Naive thymus-derived CD4-positive, alpha-beta T cell (primary cell): ENCODE measurements at regions of chr4 and their contacts with region 1.

Region 1: DNA sequence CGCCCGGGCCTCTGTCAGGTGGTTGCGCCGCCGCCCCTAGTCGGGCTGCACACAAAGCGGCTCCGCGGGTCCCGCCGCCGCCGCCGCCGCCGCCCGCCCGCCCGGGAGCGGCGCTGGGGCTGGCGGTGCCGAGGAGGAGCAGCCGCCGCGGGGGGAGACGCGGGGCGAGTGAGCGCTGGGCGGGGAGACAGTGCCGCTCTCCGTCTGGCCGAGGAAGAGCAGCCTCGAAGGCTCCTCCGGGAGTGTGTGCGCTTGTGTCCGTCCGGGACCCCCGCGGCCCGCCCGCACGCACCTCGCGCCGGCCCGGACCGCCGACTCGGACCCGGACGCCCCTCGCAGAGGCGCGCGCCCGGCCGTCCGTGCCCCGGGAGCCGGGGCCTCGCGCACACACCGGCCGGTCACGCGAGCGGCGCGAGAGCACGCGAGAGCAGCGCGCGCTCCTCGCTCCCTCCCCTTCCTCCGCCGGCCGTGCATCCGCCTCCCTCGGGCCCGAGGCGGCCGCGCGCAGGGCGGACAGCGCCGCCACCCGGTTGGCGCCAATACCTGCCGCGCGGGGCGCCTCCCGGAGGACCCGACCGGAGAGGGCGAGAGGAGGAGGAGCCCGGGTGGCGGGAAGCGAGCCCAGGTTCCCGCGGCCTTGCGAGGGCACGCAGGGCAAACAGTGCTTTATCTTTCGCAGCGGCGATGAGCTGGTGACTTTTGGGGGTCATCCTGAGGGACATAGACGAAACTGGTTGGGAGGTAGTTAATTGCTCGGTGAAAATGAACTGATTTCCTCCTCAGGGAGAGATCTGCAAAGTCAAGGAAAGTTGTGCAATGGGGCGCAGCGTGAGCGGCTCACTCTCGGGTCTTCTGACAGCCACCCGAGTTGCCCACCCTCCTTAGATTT is at the start of gene PDS5A:
- DNase-seq: peak; percentile 83 to 95 (median 91)
- ATAC-seq: peak; percentile 94
- H3K4me3 ChIP-seq: peak within 1 kb of the TSS; percentile 78
- H3K4me3 Mint-ChIP-seq: peak within 1 kb of the TSS; percentile 87 to 99 (median 91)
- H3K27ac ChIP-seq: peak within 1 kb of the TSS; percentile 89
- H3K27ac Mint-ChIP-seq: peak within 1 kb of the TSS; percentile 91 to 98 (median 96)
- H3K4me1 ChIP-seq: peaks cover 3 to 18% of the 10 kb centered on the region in 2 donors
- H3K4me1 Mint-ChIP-seq: peaks cover 28 to 43% (median 31%) of the 10 kb centered on the region in 7 donors
- H3K27me3 ChIP-seq: no peaks in the 10 kb centered on the region
- H3K27me3 Mint-ChIP-seq: no peaks in the 10 kb centered on the region
- total RNA-seq, gene PDS5A: 92.7 to 102 (median 98.5) TPM

Region 2: GRCh38 chr4:38759113-38759789 is 1218.5 kb before region 1 on chr4:
- CTCF ChIA-PET with region 1: no interaction called
- POLR2A ChIA-PET with region 1: no interaction called
- intact Hi-C with region 1: loop called in 1 of 2 experiments (anchors 2 kb)
- DNase-seq: peak; percentile 29 to 66 (median 58)
- ATAC-seq: peak; percentile 64
- H3K4me3 ChIP-seq: no peak overlapping the region
- H3K4me3 Mint-ChIP-seq: no peak overlapping the region
- H3K27ac ChIP-seq: no peak overlapping the region
- H3K27ac Mint-ChIP-seq: peak overlapping the region in 2 of 9 donors; percentile 10 to 41
- H3K4me1 ChIP-seq: peaks cover 0 to 5% of the 10 kb centered on the region in 2 donors
- H3K4me1 Mint-ChIP-seq: peaks cover 8 to 31% (median 19%) of the 10 kb centered on the region in 7 donors
- H3K27me3 ChIP-seq: no peaks in the 10 kb centered on the region
- H3K27me3 Mint-ChIP-seq: no peaks in the 10 kb centered on the region

Region 3: GRCh38 chr4:39458505-39459300 is 519.0 kb before region 1 on chr4 and contains the starts of genes LIAS and RPL9:
- CTCF ChIA-PET with region 1: interaction called, 5 read pairs
- POLR2A ChIA-PET with region 1: interaction called, 9 read pairs
- intact Hi-C with region 1: loop called (anchors 1 to 2 kb)
- DNase-seq: peak; percentile 80 to 96 (median 92)
- ATAC-seq: peak; percentile 93
- H3K4me3 ChIP-seq: peak within 1 kb of the TSS; percentile 85
- H3K4me3 Mint-ChIP-seq: peak within 1 kb of the TSS; percentile 92 to 99 (median 96)
- H3K27ac ChIP-seq: peak within 1 kb of the TSS; percentile 95
- H3K27ac Mint-ChIP-seq: peak within 1 kb of the TSS; percentile 98 to 100 (median 99)
- H3K4me1 ChIP-seq: peaks cover 17 to 19% of the 10 kb centered on the region in 2 donors
- H3K4me1 Mint-ChIP-seq: peaks cover 8 to 60% (median 47%) of the 10 kb centered on the region in 7 donors
- H3K27me3 ChIP-seq: no peaks in the 10 kb centered on the region
- H3K27me3 Mint-ChIP-seq: peaks cover 0 to 2% (median 0%) of the 10 kb centered on the region in 5 donors
- total RNA-seq, gene LIAS: 14.5 to 27.8 (median 16.4) TPM
- total RNA-seq, gene RPL9: 1,414 to 3,398 (median 2,567) TPM

Region 4: GRCh38 chr4:39638354-39639240 is 339.1 kb before region 1 on chr4 and contains the start of gene SMIM14:
- CTCF ChIA-PET with region 1: no interaction called
- POLR2A ChIA-PET with region 1: no interaction called
- intact Hi-C with region 1: loop called (anchors 1 to 2 kb)
- DNase-seq: peak; percentile 69 to 96 (median 82)
- ATAC-seq: peak; percentile 92
- H3K4me3 ChIP-seq: peak within 1 kb of the TSS; percentile 77
- H3K4me3 Mint-ChIP-seq: peak within 1 kb of the TSS; percentile 86 to 97 (median 94)
- H3K27ac ChIP-seq: peak within 1 kb of the TSS; percentile 79
- H3K27ac Mint-ChIP-seq: peak within 1 kb of the TSS; percentile 67 to 96 (median 86)
- H3K4me1 ChIP-seq: peaks cover 12 to 13% of the 10 kb centered on the region in 2 donors
- H3K4me1 Mint-ChIP-seq: peaks cover 22 to 51% (median 44%) of the 10 kb centered on the region in 7 donors
- H3K27me3 ChIP-seq: no peaks in the 10 kb centered on the region
- H3K27me3 Mint-ChIP-seq: peaks cover 0 to 27% (median 0%) of the 10 kb centered on the region in 5 donors
- total RNA-seq, gene SMIM14: 4.6 to 15.1 (median 12.9) TPM

Region 5: DNA sequence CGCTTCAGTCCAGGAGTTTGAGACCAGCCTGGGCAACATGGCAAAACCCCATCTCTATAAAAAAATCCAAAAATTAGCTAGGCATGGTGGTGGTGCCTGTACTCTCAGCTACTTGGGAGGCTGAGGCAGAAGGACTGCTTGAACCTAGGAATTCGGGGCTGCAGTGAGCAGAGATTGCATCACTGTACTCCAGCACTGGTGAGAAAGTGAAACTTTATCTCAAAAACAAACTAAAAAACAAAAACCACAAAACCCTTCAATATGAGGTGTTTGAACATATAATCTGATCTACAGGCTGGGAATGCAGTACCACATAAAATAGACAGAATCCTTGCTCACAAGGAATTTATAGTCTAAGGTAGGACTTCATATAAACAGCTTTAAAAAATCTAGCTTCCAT is 103.9 kb before region 1 on chr4:
- CTCF ChIA-PET with region 1: interaction called, 4 read pairs
- POLR2A ChIA-PET with region 1: no interaction called
- intact Hi-C with region 1: loop called (anchors 5 to 10 kb)
- DNase-seq: no peak
- ATAC-seq: no peak
- H3K4me3 ChIP-seq: no peak overlapping the region
- H3K4me3 Mint-ChIP-seq: peak overlapping the region in 3 of 10 donors; percentile 2 to 46 (median 14)
- H3K27ac ChIP-seq: no peak overlapping the region
- H3K27ac Mint-ChIP-seq: peak overlapping the region in 8 of 9 donors; percentile 49 to 74 (median 64)
- H3K4me1 ChIP-seq: no peaks in the 10 kb centered on the region
- H3K4me1 Mint-ChIP-seq: peaks cover 9 to 31% (median 20%) of the 10 kb centered on the region in 7 donors
- H3K27me3 ChIP-seq: no peaks in the 10 kb centered on the region
- H3K27me3 Mint-ChIP-seq: no peaks in the 10 kb centered on the region

Region 6: GRCh38 chr4:40193016-40193571 is 215.4 kb after region 1 on chr4:
- CTCF ChIA-PET with region 1: no interaction called
- POLR2A ChIA-PET with region 1: no interaction called
- intact Hi-C with region 1: loop called (anchors 5 kb)
- DNase-seq: peak in 8 of 9 donors; percentile 41 to 80 (median 74)
- ATAC-seq: peak; percentile 44
- H3K4me3 ChIP-seq: peak overlapping the region; percentile 61
- H3K4me3 Mint-ChIP-seq: peak overlapping the region; percentile 96 to 100 (median 99)
- H3K27ac ChIP-seq: peak overlapping the region; percentile 100
- H3K27ac Mint-ChIP-seq: peak overlapping the region; percentile 93 to 100 (median 99)
- H3K4me1 ChIP-seq: peaks cover 23 to 47% of the 10 kb centered on the region in 2 donors
- H3K4me1 Mint-ChIP-seq: peaks cover 47 to 80% (median 65%) of the 10 kb centered on the region in 7 donors
- H3K27me3 ChIP-seq: no peaks in the 10 kb centered on the region
- H3K27me3 Mint-ChIP-seq: peaks cover 0 to 4% (median 0%) of the 10 kb centered on the region in 5 donors

Region 7: DNA sequence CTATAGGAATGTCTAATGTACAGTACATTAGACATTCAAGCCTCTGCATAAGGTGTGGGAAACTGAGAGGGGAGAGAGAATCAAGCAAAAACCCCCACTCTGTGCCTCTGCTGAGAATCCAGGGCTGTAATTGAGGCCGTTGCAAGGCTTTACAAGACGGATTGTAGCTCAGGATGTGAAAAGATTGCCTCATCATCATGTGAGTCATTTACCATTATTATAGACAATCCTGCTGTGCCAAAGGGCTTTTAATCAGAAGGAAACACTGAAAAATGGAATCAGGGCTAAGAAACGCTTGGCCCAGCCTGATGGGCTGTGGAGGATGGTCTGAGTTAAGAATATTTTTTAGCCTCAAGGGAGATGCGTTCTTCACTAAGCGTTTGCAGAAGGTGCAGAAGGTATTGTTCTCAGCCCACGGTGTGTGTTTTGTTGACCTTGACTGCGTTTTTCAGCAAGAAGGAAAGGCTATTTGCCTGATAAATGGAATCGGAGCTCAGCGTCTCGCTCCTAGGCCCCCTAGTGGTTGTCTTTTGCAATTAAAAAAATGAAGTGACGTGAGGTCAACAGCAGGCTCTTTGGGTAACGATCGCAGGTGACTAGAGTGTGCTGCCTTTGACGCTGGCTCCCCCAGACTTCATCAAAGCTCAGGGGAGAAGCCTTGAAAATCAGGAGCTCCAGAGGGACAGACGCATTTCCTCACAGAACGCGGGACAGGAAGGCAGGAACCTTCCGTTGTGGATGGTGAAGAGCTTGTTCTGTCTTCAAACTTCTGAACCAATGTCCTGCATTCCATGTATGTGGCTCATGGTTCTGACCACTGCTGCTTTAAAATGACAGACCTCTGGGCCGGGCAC is 339.3 kb after region 1 on chr4:
- CTCF ChIA-PET with region 1: interaction called, 5 read pairs
- POLR2A ChIA-PET with region 1: no interaction called
- intact Hi-C with region 1: loop called in 1 of 2 experiments (anchors 2 kb)
- DNase-seq: peak; percentile 39 to 83 (median 76)
- ATAC-seq: peak; percentile 81
- H3K4me3 ChIP-seq: peak overlapping the region; percentile 75
- H3K4me3 Mint-ChIP-seq: peak overlapping the region; percentile 79 to 93 (median 86)
- H3K27ac ChIP-seq: peak overlapping the region; percentile 92
- H3K27ac Mint-ChIP-seq: peak overlapping the region; percentile 90 to 99 (median 99)
- H3K4me1 ChIP-seq: peaks cover 7 to 19% of the 10 kb centered on the region in 2 donors
- H3K4me1 Mint-ChIP-seq: peaks cover 23 to 71% (median 61%) of the 10 kb centered on the region in 7 donors
- H3K27me3 ChIP-seq: no peaks in the 10 kb centered on the region
- H3K27me3 Mint-ChIP-seq: no peaks in the 10 kb centered on the region